ENCODE measurements at regions of chr4 and their contacts with region 1.

Region 1: DNA sequence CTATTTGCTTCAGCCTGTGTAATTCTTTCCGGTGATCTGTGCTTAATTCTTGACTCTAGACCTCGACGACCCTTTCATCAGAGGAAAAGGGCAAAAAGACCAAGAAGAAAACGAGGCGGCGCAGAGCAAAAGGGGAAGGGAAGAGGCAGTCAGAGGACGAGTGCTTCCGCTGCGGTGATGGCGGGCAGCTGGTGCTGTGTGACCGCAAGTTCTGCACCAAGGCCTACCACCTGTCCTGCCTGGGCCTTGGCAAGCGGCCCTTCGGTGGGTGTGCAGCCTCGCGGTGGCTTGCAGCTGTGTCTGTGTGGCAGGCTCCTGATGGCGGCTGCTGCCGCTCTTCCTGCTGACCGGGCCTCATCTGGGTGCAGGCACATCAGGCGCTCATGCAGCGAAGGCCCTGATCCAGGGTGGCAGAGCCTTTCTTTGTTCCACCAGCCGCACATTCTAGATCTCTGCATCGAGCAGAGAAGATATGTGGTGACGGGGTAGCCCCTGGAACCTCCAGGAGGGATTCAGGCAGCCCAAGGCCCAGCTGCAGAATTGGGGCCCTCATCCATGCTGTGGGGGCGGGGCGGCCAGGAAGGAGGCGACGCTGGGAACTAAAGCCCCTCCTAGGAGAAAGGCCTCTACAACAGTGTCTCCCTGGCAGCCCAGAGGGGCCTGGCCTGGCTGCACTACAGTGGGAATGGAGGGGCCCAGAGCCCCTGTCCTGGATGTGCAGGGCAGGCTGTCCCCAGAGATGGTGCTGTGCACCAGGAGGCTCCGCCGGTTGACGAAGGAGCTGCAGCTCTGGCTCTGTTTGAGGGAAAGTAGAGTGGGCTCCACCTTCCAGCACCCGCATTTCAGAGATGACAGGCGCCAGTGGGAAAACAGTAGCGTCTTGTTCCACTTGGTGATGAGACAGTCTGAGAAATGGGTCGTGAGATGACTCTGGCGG is 32.1 kb downstream of the NELFA start:
- DNase-seq: no peak
- ATAC-seq: no peak
- H3K4me3 ChIP-seq: no peak overlapping the region
- H3K27ac ChIP-seq: no peak overlapping the region
- H3K4me1 ChIP-seq: no peaks in the 10 kb centered on the region
- H3K27me3 ChIP-seq: no peaks in the 10 kb centered on the region
- CTCF ChIP-seq: no peak

Region 2: DNA sequence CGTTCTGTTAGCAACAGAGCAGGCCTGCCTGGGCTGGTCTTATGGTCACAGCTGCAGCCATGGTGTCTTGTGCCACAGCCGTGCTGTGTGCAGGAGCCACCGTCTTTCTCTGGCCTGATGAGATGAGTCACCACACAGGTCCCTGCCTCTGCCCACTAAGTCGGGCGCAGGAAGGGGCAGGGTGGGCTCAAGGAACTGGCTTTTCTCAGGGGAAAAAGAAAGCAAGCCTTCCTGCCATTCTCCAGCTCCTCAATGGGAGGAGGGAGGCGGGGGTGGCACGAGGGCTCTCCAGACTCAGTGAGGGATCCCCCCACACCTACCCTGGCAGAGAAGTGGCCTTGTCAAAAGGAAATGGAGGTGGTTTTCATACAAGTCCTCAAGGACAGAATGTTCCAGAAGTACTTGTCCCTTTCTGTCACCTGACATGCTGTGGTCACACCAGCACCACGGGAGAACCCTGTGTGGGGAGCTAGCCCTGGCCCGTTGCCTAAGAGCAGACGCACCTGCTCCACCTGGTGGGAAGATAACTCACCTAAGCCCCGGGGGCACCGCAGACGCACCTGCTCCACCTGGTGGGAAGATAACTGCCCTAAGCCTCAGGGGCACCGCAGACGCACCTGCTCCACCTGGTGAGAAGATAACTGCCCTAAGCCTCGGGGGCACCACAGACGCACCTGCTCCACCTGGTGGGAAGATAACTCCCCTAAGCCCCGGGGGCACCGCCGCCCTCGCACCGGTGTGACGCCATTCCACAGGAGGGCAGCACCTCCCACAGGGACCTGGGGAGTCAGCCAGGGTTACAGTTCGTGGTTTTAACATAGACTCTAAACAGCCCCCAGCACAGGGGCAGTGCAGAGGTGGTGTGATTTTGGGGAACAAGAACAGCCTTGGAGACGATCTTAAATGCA is 611.2 kb before region 1 on chr4:
- intact Hi-C with region 1: no loop called
- DNase-seq: no peak
- ATAC-seq: no peak
- H3K4me3 ChIP-seq: no peak overlapping the region
- H3K27ac ChIP-seq: no peak overlapping the region
- H3K4me1 ChIP-seq: no peaks in the 10 kb centered on the region
- H3K27me3 ChIP-seq: no peaks in the 10 kb centered on the region
- CTCF ChIP-seq: no peak

Region 3: DNA sequence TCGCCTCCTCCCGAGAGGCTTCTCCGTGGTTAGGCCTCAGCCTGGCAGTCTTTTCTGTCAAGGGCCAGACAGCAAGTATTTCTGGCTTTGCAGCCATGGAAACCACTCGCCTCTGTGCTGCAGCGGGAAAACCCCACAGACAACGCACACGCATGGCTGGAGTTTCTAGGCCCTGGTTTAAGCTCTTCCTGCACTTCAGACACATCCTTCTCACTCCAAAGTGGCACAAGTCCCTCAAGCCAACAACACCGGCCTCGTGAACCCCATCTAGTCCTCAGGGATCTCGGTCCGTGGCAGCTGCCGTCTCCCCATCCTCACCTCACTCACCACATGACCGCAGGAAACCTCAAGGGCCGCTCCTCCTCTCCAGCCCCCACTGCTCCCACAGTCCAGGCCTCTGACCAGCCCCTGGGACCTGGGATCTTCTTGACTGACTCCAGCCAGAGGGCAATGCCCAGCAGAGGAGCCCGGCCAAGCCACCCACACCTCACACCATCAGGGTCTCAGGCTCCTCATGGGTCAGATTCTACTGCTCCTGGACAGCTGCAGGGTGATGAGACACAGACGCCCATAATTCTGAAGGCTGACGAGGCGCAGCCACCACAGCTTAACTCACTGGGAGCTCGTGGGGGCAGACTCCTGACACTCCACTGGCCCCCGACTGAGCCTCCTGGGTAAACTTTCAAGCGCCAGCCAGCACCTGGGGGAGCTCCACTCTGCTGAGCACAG is 142.5 kb before region 1 on chr4:
- intact Hi-C with region 1: no loop called
- DNase-seq: no peak
- ATAC-seq: no peak
- H3K4me3 ChIP-seq: no peak overlapping the region
- H3K27ac ChIP-seq: no peak overlapping the region
- H3K4me1 ChIP-seq: no peaks in the 10 kb centered on the region
- H3K27me3 ChIP-seq: no peaks in the 10 kb centered on the region
- CTCF ChIP-seq: no peak

Region 4: DNA sequence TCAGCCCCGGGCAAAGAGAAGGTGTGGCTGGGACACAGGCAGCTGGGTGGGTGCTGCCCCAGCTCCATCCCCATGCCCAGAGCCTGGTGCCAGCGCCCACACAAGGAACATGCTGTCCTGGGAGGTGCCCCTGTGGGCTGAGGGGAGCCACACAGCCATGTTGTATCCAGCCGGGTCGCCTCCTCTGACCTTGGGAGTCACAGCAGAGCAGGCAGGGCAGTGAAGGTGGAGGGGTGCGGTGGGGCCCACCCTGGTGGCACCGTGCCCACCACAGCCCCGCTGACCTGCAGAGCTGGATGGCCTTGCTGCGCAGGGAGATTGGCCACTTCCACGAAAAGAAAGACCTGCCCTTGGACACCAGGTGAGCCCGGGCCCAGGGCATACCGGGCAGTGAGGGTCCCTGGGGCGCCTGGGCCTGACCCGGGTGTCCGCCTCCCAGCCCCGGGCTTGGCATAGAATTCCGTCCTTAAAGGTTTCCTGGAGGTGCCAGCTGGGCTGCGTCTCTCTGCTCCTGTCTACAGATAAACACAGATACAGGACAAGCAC is 848.2 kb after region 1 on chr4:
- intact Hi-C with region 1: loop called in 1 of 10 experiments (anchors 5 kb)
- DNase-seq: peak in 1 of 2 donors; percentile 25
- ATAC-seq: peak in 3 of 8 donors; percentile 32 to 76 (median 32)
- H3K4me3 ChIP-seq: no peak overlapping the region
- H3K27ac ChIP-seq: no peak overlapping the region
- H3K4me1 ChIP-seq: peaks cover 0 to 18% (median 11%) of the 10 kb centered on the region in 9 donors
- H3K27me3 ChIP-seq: no peaks in the 10 kb centered on the region
- CTCF ChIP-seq: no peak